ENCODE measurements at regions of chr12 and their contacts with region 1.

Region 1: DNA sequence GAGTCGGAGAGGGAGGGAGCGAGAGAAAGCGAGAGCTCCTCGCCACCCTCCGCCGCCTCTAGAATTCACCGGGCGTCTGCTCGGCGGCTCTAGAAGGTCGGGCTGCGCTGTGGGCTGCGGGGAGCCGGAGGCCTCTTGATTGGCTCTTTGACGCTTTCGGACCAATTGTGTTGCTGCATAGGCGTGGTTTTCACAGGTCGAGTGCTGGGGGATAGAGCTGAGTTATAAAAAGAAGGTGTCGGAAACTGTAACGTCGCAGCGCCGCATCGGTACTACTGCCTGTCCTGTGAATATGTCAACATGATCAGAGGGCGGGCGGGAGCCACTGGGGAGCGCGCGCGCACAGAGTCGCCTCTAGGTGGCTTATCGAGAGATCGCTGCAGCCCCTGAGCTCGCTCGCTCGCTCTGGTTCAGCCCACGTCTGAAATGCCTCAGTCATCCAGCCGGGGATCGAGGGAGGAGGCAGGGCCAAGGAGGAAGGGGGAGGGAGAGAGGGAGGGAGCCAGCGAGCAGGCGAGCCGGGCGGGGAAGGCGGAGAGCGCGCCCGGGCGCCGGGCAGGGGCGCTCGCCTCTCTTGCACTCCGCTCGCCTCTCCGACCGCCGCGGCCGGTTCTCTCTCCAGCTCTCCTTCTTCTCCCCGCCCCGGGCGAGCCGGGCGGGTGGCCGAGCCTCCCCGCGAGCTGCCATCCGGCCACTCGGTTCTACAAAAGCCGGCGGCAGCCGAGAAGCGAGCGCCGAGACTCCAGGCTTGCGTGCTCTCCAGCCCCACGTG is at the start of gene TBX3:
- DNase-seq: peak; percentile 85 to 88
- H3K4me3 ChIP-seq: peak within 1 kb of the TSS; percentile 38 to 54 (median 39); a peak in 7 of 8 replicates
- H3K27ac ChIP-seq: no peak within 1 kb of the TSS
- H3K4me1 ChIP-seq: peaks cover 12 to 51% (median 35%) of the 10 kb centered on the region in 4 experiments
- H3K27me3 ChIP-seq: peaks cover 76 to 94% (median 88%) of the 10 kb centered on the region in 4 experiments
- CTCF ChIP-seq: peak; percentile 26 to 34 (median 33)
- EP300 ChIP-seq: peak in 1 of 2 experiments; percentile 44; a peak in 1 of 3 replicates
- POLR2A ChIP-seq: no peak
- RAD21 ChIP-seq: peak; percentile 19 to 31; a peak in 2 of 4 replicates
- total RNA-seq, gene TBX3: 0.29 and 1.0 TPM in 2 replicates

Region 2: GRCh38 chr12:114668151-114668885 is 16.0 kb before region 1 on chr12:
- CTCF ChIA-PET with region 1: interaction called, 15 read pairs
- POLR2A ChIA-PET with region 1: interaction called, 45 read pairs
- DNase-seq: peak; percentile 70 to 82
- H3K4me3 ChIP-seq: peak overlapping the region in 3 of 4 experiments; percentile 27 to 54 (median 36); a peak in 5 of 8 replicates
- H3K27ac ChIP-seq: no peak overlapping the region
- H3K4me1 ChIP-seq: peaks cover 0 to 38% (median 19%) of the 10 kb centered on the region in 4 experiments; a peak in 6 of 7 replicates
- H3K27me3 ChIP-seq: peaks cover 71 to 91% (median 88%) of the 10 kb centered on the region in 4 experiments
- CTCF ChIP-seq: peak; percentile 50 to 79 (median 54)
- EP300 ChIP-seq: no peak
- POLR2A ChIP-seq: no peak
- RAD21 ChIP-seq: peak; percentile 76 to 79

Region 3: DNA sequence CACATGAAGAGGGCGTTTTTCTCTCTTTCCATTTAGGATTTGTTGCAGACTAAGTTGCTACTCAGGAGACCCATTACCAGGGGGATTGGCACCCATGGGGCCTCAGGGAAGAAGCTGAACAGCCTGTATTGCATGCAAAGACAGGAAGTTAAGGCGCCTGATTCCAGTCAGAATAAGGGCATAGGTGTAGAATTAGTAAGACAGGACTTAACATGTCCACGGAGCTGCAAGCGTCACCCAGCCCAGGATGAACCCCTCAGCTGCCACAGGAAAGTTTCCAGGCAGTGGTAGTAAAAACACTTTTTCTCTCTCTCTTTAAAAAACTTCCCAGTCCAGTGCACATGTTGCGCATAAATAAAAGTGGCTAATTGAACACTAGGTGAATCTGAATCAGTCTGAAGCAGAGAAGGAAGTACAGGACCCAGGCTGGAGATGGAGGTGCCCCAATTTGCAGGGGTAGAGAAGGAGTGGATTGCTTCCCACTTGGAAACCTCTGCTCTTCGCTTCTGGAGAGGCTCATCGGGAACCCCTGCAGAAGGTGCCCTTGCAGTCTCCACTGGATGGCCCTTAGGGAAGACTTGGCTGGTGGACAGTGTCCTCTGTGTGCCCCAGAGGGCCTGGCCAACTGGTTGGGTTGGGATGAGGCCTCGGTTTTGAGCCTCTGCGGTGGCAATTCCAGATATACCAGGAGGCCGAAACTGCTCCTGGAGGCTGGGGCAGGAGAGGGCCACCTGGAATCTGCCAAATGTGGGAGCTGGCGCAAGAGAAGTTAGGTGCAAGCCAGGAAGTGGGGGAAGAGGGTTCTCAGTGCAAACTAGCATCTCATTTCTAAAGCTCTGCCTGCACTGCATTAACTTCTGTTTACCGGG is 10.4 kb after region 1 on chr12:
- CTCF ChIA-PET with region 1: interaction called, 12 read pairs
- POLR2A ChIA-PET with region 1: interaction called, 5 read pairs
- DNase-seq: no peak
- H3K4me3 ChIP-seq: no peak overlapping the region
- H3K27ac ChIP-seq: no peak overlapping the region
- H3K4me1 ChIP-seq: peaks cover 9 to 35% (median 15%) of the 10 kb centered on the region in 4 experiments
- H3K27me3 ChIP-seq: peaks cover 93 to 100% (median 99%) of the 10 kb centered on the region in 4 experiments
- CTCF ChIP-seq: no peak
- EP300 ChIP-seq: no peak
- POLR2A ChIP-seq: no peak
- RAD21 ChIP-seq: no peak

Region 4: GRCh38 chr12:114777052-114777451 is 92.8 kb after region 1 on chr12:
- CTCF ChIA-PET with region 1: no interaction called
- POLR2A ChIA-PET with region 1: no interaction called
- DNase-seq: no peak
- H3K4me3 ChIP-seq: no peak overlapping the region
- H3K27ac ChIP-seq: no peak overlapping the region
- H3K4me1 ChIP-seq: no peaks in the 10 kb centered on the region
- H3K27me3 ChIP-seq: no peaks in the 10 kb centered on the region
- CTCF ChIP-seq: no peak
- EP300 ChIP-seq: no peak
- POLR2A ChIP-seq: no peak
- RAD21 ChIP-seq: no peak

Region 5: GRCh38 chr12:114823724-114824123 is 139.4 kb after region 1 on chr12:
- CTCF ChIA-PET with region 1: no interaction called
- POLR2A ChIA-PET with region 1: no interaction called
- DNase-seq: no peak
- H3K4me3 ChIP-seq: no peak overlapping the region
- H3K27ac ChIP-seq: no peak overlapping the region; the same call in 1 of the 2 replicates
- H3K4me1 ChIP-seq: no peaks in the 10 kb centered on the region
- H3K27me3 ChIP-seq: no peaks in the 10 kb centered on the region; a peak in 1 of 7 replicates
- CTCF ChIP-seq: no peak
- EP300 ChIP-seq: no peak
- POLR2A ChIP-seq: no peak
- RAD21 ChIP-seq: no peak